Mammary epithelial cell (primary cell): ENCODE measurements at regions of chr9 and their contacts with region 1.

Region 1: DNA sequence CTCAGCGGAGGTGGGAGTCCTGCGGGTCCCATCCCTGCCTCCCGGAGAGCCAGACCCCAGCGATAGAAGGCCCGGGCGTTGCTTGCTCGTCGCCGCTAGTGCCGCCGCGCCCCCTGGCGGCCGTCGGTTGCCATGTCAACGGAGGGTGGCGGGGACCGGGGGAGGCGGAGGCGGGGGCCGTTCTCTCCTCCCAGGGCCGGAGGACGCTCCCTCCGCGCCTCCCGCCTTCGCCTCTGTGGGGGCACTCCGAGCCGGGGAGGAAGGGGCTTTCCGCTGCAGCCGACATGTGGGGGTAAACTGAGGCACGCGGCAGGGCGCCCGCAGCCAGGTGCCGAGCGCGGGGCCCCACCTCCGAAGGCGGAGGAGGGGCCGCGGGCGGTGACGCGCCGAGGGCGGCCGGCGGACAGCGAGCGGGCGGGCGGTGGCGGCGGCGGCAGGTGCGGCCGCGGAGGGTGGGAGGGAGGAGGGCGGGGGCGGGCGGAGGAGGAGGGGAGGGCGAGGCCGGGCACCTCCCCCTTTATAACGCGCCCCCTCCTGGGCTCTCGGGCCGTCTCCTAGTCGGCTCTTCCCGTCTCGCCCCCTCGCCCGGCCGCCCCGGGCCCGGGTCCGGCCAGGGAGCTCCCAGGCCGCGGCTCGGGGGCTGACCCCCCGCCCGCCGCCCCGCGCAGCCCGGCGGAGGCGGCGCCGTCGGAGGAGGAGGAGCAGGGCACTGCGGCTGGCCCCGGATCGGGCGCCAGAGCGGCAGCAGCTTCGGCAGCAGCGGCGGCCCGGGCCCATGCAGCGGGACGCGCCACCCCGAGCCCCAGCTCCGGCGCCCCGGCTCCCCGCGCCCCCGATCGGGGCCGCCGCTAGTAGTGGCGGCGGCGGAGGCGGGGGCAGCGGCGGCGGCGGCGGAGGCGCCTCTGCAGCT is 556 bp upstream of the CDK9 start:
- DNase-seq: peak; percentile 74
- H3K4me3 ChIP-seq: peak overlapping the region; percentile 47 to 94 (median 70)
- H3K27ac ChIP-seq: peak overlapping the region; percentile 43
- H3K4me1 ChIP-seq: peaks cover 18% of the 10 kb centered on the region
- H3K27me3 ChIP-seq: no peaks in the 10 kb centered on the region
- CTCF ChIP-seq: peak; percentile 35 to 84

Region 2: GRCh38 chr9:127503947-127504782 is 281.1 kb before region 1 on chr9:
- CTCF ChIA-PET with region 1: no interaction called
- dilution Hi-C with region 1: no loop called
- in situ Hi-C with region 1: no loop called
- intact Hi-C with region 1: loop called (anchors 2 kb)
- DNase-seq: peak; percentile 59
- H3K4me3 ChIP-seq: no peak overlapping the region
- H3K27ac ChIP-seq: no peak overlapping the region
- H3K4me1 ChIP-seq: peaks cover 9% of the 10 kb centered on the region
- H3K27me3 ChIP-seq: no peaks in the 10 kb centered on the region
- CTCF ChIP-seq: peak; percentile 77 to 86

Region 3: GRCh38 chr9:127698985-127699670 is 86.2 kb before region 1 on chr9:
- CTCF ChIA-PET with region 1: no interaction called
- dilution Hi-C with region 1: no loop called
- in situ Hi-C with region 1: no loop called
- intact Hi-C with region 1: no loop called
- DNase-seq: peak; percentile 85
- H3K4me3 ChIP-seq: peak overlapping the region in 2 of 3 experiments; percentile 15 to 31
- H3K27ac ChIP-seq: no peak overlapping the region
- H3K4me1 ChIP-seq: peaks cover 3% of the 10 kb centered on the region
- H3K27me3 ChIP-seq: no peaks in the 10 kb centered on the region
- CTCF ChIP-seq: no peak

Region 4: GRCh38 chr9:127734747-127735529 is 50.3 kb before region 1 on chr9 and contains the start of gene TOR2A:
- CTCF ChIA-PET with region 1: interaction called, 11 read pairs
- dilution Hi-C with region 1: no loop called
- in situ Hi-C with region 1: loop called (anchors 5 kb)
- intact Hi-C with region 1: loop called (anchors 1 kb)
- DNase-seq: peak; percentile 95
- H3K4me3 ChIP-seq: peak within 1 kb of the TSS; percentile 59 to 62 (median 61)
- H3K27ac ChIP-seq: peak within 1 kb of the TSS; percentile 51
- H3K4me1 ChIP-seq: peaks cover 20% of the 10 kb centered on the region
- H3K27me3 ChIP-seq: no peaks in the 10 kb centered on the region
- CTCF ChIP-seq: peak; percentile 84 to 94
- total RNA-seq, gene TOR2A: 4.0 to 13.2 TPM

Region 5: DNA sequence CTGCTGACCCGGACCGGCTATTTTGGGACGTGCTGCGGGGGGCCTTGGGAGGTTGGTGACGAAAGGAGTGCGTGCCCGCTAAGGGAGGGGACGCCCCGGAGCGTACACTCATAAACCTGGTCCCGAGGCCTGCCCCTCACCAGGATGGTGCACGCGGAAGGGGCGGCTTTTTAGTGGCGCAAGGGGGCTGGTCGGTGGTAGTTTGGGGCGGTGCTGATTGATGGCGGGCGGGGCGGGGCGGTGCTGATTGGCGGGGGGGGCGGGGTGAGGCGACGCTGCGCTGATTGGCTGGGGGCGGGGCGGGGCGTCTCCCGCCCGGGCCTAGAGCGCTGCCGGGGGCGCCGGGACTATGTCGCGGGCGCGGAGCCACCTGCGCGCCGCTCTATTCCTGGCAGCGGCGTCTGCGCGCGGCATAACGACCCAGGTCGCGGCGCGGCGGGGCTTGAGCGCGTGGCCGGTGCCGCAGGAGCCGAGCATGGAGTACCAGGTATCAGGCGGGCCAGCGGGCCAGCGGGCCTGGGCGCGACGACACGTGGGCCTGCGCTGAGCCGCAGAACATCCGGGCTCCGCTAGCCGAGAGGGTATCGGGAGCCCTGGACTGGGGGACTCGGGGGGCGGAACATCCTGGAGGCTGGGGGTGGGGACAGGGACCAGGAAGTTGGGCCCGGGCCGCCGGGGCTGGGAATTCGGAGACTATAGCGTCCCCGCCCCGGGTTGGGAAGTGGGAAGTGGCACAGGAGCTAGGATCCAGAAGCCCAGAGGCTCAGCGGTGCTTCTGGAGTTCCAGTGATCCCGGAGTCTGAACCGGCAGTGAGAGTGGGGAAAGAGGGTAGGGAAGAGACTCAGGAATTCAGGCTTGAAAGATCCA is 17.5 kb after region 1 on chr9 and contains the start of gene FPGS:
- CTCF ChIA-PET with region 1: interaction called, 3 read pairs
- dilution Hi-C with region 1: no loop called
- in situ Hi-C with region 1: no loop called
- intact Hi-C with region 1: loop called (anchors 1 kb)
- DNase-seq: peak; percentile 82
- H3K4me3 ChIP-seq: peak within 1 kb of the TSS; percentile 72 to 93 (median 77)
- H3K27ac ChIP-seq: peak within 1 kb of the TSS; percentile 98
- H3K4me1 ChIP-seq: peaks cover 25% of the 10 kb centered on the region
- H3K27me3 ChIP-seq: no peaks in the 10 kb centered on the region
- CTCF ChIP-seq: no peak
- total RNA-seq, gene FPGS: 59.5 to 85.8 TPM

Region 6: DNA sequence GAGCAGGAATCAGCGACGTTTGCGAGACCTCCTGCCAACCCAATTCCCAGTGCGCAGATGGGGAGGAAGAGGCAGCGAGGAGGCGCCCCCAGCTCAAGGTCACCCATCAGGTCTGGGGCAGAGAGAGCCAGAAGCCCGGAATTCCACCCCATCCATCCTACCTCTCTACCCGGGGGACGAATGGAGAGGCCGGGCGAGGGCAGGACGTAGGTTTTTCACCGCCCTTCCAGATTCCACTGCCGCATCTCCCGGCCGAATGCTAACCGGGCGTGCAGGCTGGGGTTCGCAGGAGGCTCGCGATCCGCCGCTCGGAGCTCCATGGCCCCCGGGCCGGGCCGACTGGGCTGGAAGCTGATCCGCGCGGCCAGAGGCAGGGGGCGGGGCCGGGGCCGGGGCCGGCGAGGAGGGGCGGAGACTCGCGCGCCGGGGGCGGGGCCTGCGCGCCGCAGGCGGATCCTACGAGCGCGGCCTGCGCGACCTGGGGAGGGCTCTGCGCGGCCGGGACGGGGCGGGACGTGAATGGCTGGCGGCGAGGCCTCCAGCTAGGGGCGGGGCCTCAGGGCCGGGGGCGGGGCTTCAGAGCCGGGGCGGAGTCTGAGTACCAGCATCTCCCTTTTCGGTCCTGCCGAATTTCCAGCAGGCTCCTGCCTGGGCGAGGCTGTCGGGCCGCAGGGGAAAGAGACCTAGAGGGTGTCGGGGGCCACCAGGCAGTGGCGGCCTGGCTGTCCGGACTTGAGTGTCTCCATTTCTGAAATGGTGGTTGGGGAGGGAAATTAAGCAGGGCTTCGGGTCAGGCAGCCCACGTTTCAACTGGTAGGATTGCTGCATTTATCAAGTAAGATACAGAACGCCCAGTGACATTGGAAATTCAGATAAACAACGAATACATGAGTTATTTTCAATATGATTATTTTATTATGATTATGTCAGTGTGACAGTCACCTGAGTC is 131.7 kb after region 1 on chr9 and contains the start of gene ST6GALNAC4:
- CTCF ChIA-PET with region 1: interaction called, 5 read pairs
- dilution Hi-C with region 1: no loop called
- in situ Hi-C with region 1: no loop called
- intact Hi-C with region 1: loop called (anchors 1 kb)
- DNase-seq: peak; percentile 76
- H3K4me3 ChIP-seq: peak within 1 kb of the TSS; percentile 35 to 62 (median 58)
- H3K27ac ChIP-seq: peak within 1 kb of the TSS; percentile 16
- H3K4me1 ChIP-seq: peaks cover 38% of the 10 kb centered on the region
- H3K27me3 ChIP-seq: no peaks in the 10 kb centered on the region
- CTCF ChIP-seq: no peak
- total RNA-seq, gene ST6GALNAC4: 14.3 to 19.6 TPM